H1 (cell line): ENCODE measurements at regions of chr12 and their contacts with region 1.

Region 1: DNA sequence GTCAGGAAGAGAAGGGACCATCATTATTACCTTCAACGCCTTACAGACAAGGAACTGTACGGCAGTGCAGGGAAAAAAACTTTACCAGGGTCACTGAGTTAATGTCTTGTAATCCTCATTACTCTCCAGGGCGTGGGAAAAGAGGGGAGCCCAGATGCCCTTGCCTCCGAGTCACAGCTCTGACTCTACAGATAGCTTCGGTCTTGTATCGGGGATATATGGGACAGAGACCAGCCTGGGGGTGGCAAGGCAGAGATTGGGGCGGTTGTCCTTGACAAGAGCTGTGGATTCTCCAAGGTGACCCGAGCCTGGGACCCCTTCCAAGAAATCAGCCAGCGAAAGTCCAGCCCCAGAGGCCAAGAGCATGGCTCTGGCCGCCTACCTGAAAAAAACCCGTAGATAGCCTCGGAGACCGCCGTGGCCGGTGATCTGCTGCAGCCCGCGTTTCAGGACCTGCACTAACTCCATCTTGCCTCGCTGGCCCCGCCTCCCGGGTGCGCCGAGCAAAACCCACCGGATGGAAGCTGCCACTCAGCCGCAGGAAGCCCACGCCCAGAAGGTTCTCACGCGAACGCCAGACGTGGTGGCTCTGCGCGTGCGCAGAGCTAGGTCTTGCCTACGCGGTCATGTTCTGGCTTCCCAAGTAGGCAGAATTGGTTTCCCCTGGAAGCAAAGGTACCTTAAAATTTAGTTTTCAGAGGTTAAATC is at the start of gene NDUFA12:
- DNase-seq: peak; percentile 93 to 96
- H3K4me3 ChIP-seq: peak within 1 kb of the TSS; percentile 78 to 95 (median 94)
- H3K27ac ChIP-seq: peak within 1 kb of the TSS; percentile 80
- H3K4me1 ChIP-seq: no peaks in the 10 kb centered on the region
- H3K27me3 ChIP-seq: no peaks in the 10 kb centered on the region
- CTCF ChIP-seq: no peak; a peak in 1 of 4 replicates
- EP300 ChIP-seq: no peak
- POLR2A ChIP-seq: peak; percentile 96 to 97
- RAD21 ChIP-seq: peak in 1 of 2 experiments; percentile 16; a peak in 1 of 4 replicates
- total RNA-seq, gene NDUFA12: 98.1 and 99.4 TPM in 2 replicates

Region 2: DNA sequence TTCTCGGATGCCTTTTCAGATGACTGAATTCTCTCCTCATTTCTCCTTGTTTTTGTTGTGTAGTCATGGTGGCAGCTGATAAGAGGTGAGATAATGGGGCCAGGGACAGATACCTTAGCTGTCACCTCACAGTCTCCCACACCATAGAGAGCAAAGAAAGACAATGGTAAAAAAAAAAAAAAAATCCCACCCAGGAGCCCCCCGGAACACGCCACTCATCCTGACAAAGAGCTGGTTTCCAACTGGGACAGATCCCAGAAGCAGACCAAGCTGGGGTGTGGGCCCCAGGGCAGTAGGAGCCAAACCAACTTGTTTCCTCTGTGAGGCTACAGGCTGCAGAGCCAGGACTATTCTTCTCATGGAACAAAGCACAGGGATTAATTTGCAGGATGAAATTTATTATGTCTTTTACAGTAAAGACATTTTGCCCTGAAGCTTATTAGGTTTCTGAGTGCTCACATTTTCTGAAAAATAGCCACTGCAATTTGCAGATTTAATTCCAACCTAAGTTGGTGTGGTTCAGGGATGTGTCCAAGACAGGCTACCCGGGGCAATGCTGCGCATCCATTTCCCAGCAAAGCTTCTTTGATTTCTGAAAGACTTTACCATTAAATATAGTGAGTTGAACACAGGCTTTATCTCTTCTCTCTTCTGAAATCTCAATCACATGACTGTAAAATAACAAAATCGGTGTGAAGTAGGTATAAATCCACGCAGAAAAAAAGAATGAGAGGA is 52.0 kb before region 1 on chr12:
- CTCF ChIA-PET with region 1: no interaction called
- POLR2A ChIA-PET with region 1: no interaction called
- DNase-seq: no peak
- H3K4me3 ChIP-seq: no peak overlapping the region
- H3K27ac ChIP-seq: no peak overlapping the region
- H3K4me1 ChIP-seq: no peaks in the 10 kb centered on the region
- H3K27me3 ChIP-seq: no peaks in the 10 kb centered on the region
- CTCF ChIP-seq: no peak
- EP300 ChIP-seq: no peak
- POLR2A ChIP-seq: no peak
- RAD21 ChIP-seq: no peak

Region 3: GRCh38 chr12:94988471-94988870 is 14.9 kb before region 1 on chr12:
- CTCF ChIA-PET with region 1: no interaction called
- POLR2A ChIA-PET with region 1: interaction called, 17 read pairs
- DNase-seq: no peak
- H3K4me3 ChIP-seq: no peak overlapping the region
- H3K27ac ChIP-seq: no peak overlapping the region
- H3K4me1 ChIP-seq: peaks cover 0 to 6% (median 1%) of the 10 kb centered on the region in 4 experiments; a peak in 2 of 7 replicates
- H3K27me3 ChIP-seq: no peaks in the 10 kb centered on the region
- CTCF ChIP-seq: no peak
- EP300 ChIP-seq: no peak
- POLR2A ChIP-seq: no peak
- RAD21 ChIP-seq: no peak

Region 4: GRCh38 chr12:95072900-95073697 is 69.7 kb after region 1 on chr12 and contains the start of gene NR2C1:
- CTCF ChIA-PET with region 1: no interaction called
- POLR2A ChIA-PET with region 1: interaction called, 13 read pairs
- DNase-seq: peak; percentile 86 to 91
- H3K4me3 ChIP-seq: peak within 1 kb of the TSS; percentile 79 to 97 (median 86)
- H3K27ac ChIP-seq: peak within 1 kb of the TSS; percentile 71
- H3K4me1 ChIP-seq: no peaks in the 10 kb centered on the region
- H3K27me3 ChIP-seq: no peaks in the 10 kb centered on the region
- CTCF ChIP-seq: no peak
- EP300 ChIP-seq: no peak
- POLR2A ChIP-seq: no peak
- RAD21 ChIP-seq: no peak
- total RNA-seq, gene NR2C1: 39.0 and 48.3 TPM in 2 replicates

Region 5: GRCh38 chr12:95143621-95144205 is 140.3 kb after region 1 on chr12:
- CTCF ChIA-PET with region 1: no interaction called
- POLR2A ChIA-PET with region 1: no interaction called
- DNase-seq: no peak
- H3K4me3 ChIP-seq: no peak overlapping the region
- H3K27ac ChIP-seq: no peak overlapping the region
- H3K4me1 ChIP-seq: peaks cover 0 to 9% (median 8%) of the 10 kb centered on the region in 4 experiments; a peak in 3 of 7 replicates
- H3K27me3 ChIP-seq: no peaks in the 10 kb centered on the region
- CTCF ChIP-seq: no peak
- EP300 ChIP-seq: no peak
- POLR2A ChIP-seq: no peak
- RAD21 ChIP-seq: no peak